ENCODE measurements at regions of chr5 and their contacts with region 1.

Region 1: GRCh38 chr5:142720641-142721271 is 34.9 kb upstream of the FGF1 start:
- DNase-seq: peak; percentile 100
- H3K4me3 ChIP-seq: peak overlapping the region in 1 of 3 experiments; percentile 13
- H3K27ac ChIP-seq: peak overlapping the region; percentile 92
- H3K4me1 ChIP-seq: peaks cover 44% of the 10 kb centered on the region
- H3K27me3 ChIP-seq: no peaks in the 10 kb centered on the region
- CTCF ChIP-seq: peak; percentile 21 to 57

Region 2: GRCh38 chr5:142826741-142827732 is 106.3 kb after region 1 on chr5:
- CTCF ChIA-PET with region 1: no interaction called
- dilution Hi-C with region 1: no loop called
- in situ Hi-C with region 1: no loop called
- intact Hi-C with region 1: loop called (anchors 2 kb)
- DNase-seq: peak; percentile 82
- H3K4me3 ChIP-seq: no peak overlapping the region
- H3K27ac ChIP-seq: peak overlapping the region; percentile 15
- H3K4me1 ChIP-seq: peaks cover 54% of the 10 kb centered on the region
- H3K27me3 ChIP-seq: no peaks in the 10 kb centered on the region
- CTCF ChIP-seq: no peak

Region 3: DNA sequence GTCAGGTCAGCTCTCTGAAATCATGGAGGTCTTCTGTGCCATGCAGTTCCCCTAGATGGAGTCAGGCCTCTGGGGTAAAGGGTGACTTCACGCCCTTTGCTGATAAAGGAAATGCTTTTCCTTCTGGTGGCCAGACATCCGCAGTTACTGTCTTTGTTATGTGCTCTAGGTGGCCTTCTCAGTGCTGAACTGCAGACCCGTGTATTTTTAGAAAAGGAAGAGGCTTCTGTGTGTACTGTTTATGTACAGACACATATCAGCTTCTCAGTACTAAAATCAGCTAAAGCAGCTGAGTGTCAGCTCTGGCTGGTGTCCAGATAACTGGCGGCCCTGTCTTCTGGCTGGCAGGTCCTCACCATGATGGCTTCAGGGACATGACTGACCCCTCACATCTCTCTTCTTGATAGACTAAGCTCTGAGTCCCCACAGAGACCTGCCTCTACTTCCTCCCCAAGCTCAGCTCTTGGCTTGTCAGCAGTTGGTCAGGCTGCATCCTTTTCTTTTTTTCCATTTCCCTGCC is 124.7 kb after region 1 on chr5:
- CTCF ChIA-PET with region 1: no interaction called
- dilution Hi-C with region 1: no loop called
- in situ Hi-C with region 1: no loop called
- intact Hi-C with region 1: no loop called
- DNase-seq: no peak
- H3K4me3 ChIP-seq: no peak overlapping the region
- H3K27ac ChIP-seq: no peak overlapping the region
- H3K4me1 ChIP-seq: no peaks in the 10 kb centered on the region
- H3K27me3 ChIP-seq: no peaks in the 10 kb centered on the region
- CTCF ChIP-seq: no peak

Region 4: GRCh38 chr5:142874537-142874936 is 153.8 kb after region 1 on chr5:
- CTCF ChIA-PET with region 1: interaction called, 4 read pairs
- dilution Hi-C with region 1: loop called (anchors 5 kb)
- in situ Hi-C with region 1: loop called in 1 of 2 experiments (anchors 5 kb)
- intact Hi-C with region 1: no loop called
- DNase-seq: peak; percentile 72
- H3K4me3 ChIP-seq: no peak overlapping the region
- H3K27ac ChIP-seq: peak overlapping the region; percentile 0
- H3K4me1 ChIP-seq: peaks cover 46% of the 10 kb centered on the region
- H3K27me3 ChIP-seq: no peaks in the 10 kb centered on the region
- CTCF ChIP-seq: no peak

Measured in mammary epithelial cell (primary cell).